ENCODE measurements at regions of chr3 and their contacts with region 1.

Region 1: GRCh38 chr3:61194892-61195538 is 56.2 kb downstream of the FHIT start:
- DNase-seq: no peak
- H3K4me3 ChIP-seq: no peak overlapping the region
- H3K27ac ChIP-seq: no peak overlapping the region
- H3K4me1 ChIP-seq: no peaks in the 10 kb centered on the region
- H3K27me3 ChIP-seq: no peaks in the 10 kb centered on the region
- CTCF ChIP-seq: no peak

Region 2: GRCh38 chr3:61172684-61173083 is 22.3 kb before region 1 on chr3:
- intact Hi-C with region 1: loop called (anchors 1 kb)
- DNase-seq: no peak
- H3K4me3 ChIP-seq: no peak overlapping the region
- H3K27ac ChIP-seq: no peak overlapping the region
- H3K4me1 ChIP-seq: no peaks in the 10 kb centered on the region
- H3K27me3 ChIP-seq: no peaks in the 10 kb centered on the region
- CTCF ChIP-seq: no peak